AG04449 (cell line): ENCODE measurements at regions of chr17 and their contacts with region 1.

Region 1: DNA sequence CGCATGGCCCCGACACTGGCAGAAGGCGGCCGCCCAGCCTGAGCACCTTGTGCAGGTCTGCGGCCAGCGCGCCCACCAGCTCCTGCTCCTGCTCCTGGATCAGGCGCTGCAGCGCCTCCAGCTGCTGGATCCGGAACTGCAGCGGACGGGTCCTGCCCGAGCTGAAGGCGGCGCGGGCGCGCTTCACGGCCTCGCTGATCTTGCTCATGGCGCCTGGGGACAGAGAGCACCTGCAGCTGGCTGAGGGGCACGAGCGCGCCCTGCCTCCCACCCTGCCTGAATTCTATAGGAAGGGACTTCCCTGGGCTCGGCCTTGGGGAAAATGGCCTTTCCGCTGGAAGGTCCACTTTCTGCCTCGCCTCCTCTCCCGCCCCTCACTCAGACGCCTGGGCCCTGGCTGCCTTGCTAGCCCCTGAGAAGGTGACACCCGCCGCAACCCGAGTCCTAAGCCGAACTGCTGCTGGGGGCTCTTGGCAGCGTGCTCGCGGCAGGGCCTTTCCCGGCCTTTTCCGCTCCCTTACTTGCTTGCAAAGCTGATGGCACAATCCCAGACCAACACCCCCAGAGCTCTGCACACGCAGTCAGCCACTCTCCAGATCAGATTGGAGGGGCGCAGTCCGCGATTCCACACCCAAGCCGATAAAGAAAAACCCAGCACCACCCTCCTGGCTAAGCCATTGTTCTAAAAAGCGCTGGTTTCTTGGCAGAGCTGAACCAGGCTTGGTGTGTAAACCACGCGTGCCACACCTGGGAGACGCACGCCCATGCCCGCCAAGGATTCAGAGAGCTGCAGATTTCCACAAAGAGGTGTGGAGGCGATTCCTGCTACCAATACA is 3.0 kb downstream of the ALDH3A1 start:
- DNase-seq: no peak
- H3K4me3 ChIP-seq: peak overlapping the region; percentile 18; the same call in 1 of the 2 replicates
- CTCF ChIP-seq: peak; percentile 93

Region 2: GRCh38 chr17:19733953-19734526 is 11.1 kb before region 1 on chr17:
- CTCF ChIA-PET with region 1: interaction called, 19 read pairs
- POLR2A ChIA-PET with region 1: no interaction called
- DNase-seq: no peak
- H3K4me3 ChIP-seq: no peak overlapping the region
- CTCF ChIP-seq: no peak

Region 3: DNA sequence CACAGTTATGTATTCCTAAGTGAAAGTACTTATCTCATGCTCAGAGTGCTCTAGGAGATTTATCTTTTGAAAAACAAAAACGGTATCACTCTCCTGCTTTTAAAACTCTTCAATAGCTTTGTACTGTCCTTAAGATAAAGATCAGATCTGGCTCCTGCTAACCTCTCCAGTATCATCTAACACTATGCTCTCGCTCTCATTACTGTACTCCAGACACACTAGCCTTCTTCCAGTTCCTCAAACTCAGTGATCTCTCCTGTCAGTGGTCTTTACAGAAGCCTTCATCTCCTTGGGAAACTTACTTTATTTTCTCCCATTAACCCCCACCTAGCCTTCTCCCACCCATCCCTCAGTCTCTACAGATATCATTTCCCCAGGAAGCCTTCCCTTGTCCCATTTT is 112.5 kb after region 1 on chr17:
- CTCF ChIA-PET with region 1: no interaction called
- POLR2A ChIA-PET with region 1: no interaction called
- DNase-seq: no peak
- H3K4me3 ChIP-seq: no peak overlapping the region
- CTCF ChIP-seq: no peak